Mammary epithelial cell (primary cell): ENCODE measurements at regions of chr20 and their contacts with region 1.

Region 1: DNA sequence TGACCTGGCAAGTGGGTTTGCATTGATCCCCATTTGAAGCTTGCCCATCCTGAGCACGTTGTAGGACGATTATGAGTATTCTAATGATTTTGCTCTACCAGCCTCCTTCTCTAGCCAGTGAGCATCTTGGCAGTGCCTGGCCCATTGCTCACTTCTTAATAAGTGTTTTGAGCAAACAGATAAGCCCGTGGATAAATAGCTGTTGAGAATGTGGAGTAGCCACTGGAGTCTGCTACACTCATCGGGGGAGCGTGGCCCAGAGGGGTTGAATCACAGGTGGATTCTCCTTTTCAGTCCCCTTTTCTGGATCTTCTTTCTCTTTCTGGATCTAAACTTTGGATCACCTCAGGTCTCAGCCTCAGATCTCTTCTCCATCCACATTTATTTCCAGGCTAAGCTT is 15.9 kb upstream of the EDN3 start:
- DNase-seq: no peak
- H3K4me3 ChIP-seq: no peak overlapping the region
- H3K27ac ChIP-seq: no peak overlapping the region
- H3K4me1 ChIP-seq: no peaks in the 10 kb centered on the region
- H3K27me3 ChIP-seq: no peaks in the 10 kb centered on the region
- CTCF ChIP-seq: no peak

Region 2: GRCh38 chr20:59314811-59315391 is 30.4 kb after region 1 on chr20:
- CTCF ChIA-PET with region 1: no interaction called
- dilution Hi-C with region 1: loop called (anchors 5 kb)
- in situ Hi-C with region 1: no loop called
- intact Hi-C with region 1: no loop called
- DNase-seq: no peak
- H3K4me3 ChIP-seq: no peak overlapping the region
- H3K27ac ChIP-seq: no peak overlapping the region
- H3K4me1 ChIP-seq: no peaks in the 10 kb centered on the region
- H3K27me3 ChIP-seq: peaks cover 1% of the 10 kb centered on the region
- CTCF ChIP-seq: no peak

Region 3: DNA sequence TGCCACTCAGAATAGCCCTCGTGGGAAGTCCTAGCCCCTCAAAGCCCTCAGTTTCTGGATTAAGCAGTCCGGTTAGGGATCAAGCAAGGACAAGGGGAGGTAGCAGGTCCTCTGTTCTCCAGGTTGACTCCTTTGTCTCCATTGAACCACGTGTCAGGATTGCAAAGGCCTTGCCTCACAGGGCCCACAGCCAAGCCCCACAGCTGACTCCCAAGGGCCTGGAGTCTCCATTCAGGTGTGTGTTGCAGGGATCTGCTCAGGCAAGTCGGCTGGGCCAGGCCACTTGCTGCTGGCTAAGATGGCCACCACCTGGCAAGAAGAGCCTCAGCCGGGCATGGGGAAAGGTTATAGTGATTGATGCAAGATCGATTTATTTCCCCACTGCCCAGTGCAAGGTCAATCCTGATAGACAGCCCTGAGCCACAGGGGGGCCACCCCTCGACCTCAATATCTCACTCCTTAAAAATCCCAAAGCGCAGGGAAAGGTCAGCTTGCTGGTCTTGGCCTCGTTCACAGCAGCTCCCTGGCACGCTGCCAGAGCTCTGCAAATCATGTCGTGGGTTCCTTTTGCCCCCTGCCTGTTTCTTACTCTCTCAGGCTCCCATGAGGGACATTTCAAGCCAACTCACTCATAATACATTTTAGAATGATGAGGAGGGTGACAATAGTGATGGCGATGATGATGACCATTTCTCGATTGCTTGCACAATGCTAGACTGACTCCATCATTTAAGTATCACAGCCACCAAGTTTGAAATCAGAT is 91.8 kb after region 1 on chr20:
- CTCF ChIA-PET with region 1: no interaction called
- dilution Hi-C with region 1: loop called (anchors 5 kb)
- in situ Hi-C with region 1: no loop called
- intact Hi-C with region 1: no loop called
- DNase-seq: peak; percentile 24
- H3K4me3 ChIP-seq: no peak overlapping the region
- H3K27ac ChIP-seq: no peak overlapping the region
- H3K4me1 ChIP-seq: no peaks in the 10 kb centered on the region
- H3K27me3 ChIP-seq: no peaks in the 10 kb centered on the region
- CTCF ChIP-seq: no peak

Region 4: GRCh38 chr20:59645761-59646171 is 361.3 kb after region 1 on chr20:
- CTCF ChIA-PET with region 1: no interaction called
- dilution Hi-C with region 1: no loop called
- in situ Hi-C with region 1: no loop called
- intact Hi-C with region 1: no loop called
- DNase-seq: no peak
- H3K4me3 ChIP-seq: no peak overlapping the region
- H3K27ac ChIP-seq: no peak overlapping the region
- H3K4me1 ChIP-seq: no peaks in the 10 kb centered on the region
- H3K27me3 ChIP-seq: peaks cover 2% of the 10 kb centered on the region
- CTCF ChIP-seq: no peak